Activated B cell treated with CpG ODN at 0.5 μM for 24 hours (primary cell): ENCODE measurements at regions of chr3 and their contacts with region 1.

Region 1: DNA sequence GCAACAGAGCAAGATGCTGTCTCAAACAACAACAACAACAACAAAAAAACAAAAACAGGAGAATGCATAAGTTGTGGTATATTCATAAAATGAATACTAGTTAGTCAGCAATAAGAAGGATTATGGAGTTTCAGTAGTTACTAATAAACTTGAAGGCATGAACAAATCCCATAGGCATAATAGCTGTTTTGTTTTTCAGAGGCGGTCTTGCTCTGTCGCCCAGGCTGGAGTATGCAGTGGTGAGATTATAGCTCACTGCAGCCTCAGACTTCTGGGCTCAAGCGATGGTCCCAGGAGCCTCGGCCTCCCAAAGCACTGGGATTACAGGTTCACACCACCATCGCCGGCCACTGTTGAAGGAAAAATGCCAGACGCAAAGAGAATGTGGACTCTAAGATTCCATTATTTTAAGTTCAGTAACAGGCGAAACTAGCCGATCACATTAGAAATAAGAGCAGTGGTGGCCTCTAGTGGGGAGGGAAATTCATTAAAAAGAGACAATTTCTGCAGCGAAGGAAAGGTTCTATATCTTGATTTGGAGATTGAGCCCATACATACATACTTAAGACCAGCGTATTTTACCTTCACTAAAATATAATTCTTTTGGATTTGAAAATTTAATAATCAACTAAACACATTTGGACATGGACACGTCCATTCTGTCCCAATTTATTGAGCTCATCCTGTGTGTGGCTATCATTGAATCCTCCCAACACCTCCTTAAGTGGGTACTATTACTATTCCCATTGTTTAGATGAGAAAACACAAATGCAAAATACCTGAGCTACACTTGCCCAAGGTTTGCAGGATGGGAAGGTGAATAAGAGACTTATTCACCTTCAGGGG is 27.4 kb upstream of the HDAC11 start:
- DNase-seq: peak; percentile 28
- ATAC-seq: no peak
- H3K4me3 Mint-ChIP-seq: peak overlapping the region; percentile 84
- H3K27ac Mint-ChIP-seq: peak overlapping the region; percentile 89
- H3K4me1 Mint-ChIP-seq: peaks cover 18% of the 10 kb centered on the region
- H3K27me3 Mint-ChIP-seq: no peaks in the 10 kb centered on the region
- CTCF ChIP-seq: no peak

Region 2: DNA sequence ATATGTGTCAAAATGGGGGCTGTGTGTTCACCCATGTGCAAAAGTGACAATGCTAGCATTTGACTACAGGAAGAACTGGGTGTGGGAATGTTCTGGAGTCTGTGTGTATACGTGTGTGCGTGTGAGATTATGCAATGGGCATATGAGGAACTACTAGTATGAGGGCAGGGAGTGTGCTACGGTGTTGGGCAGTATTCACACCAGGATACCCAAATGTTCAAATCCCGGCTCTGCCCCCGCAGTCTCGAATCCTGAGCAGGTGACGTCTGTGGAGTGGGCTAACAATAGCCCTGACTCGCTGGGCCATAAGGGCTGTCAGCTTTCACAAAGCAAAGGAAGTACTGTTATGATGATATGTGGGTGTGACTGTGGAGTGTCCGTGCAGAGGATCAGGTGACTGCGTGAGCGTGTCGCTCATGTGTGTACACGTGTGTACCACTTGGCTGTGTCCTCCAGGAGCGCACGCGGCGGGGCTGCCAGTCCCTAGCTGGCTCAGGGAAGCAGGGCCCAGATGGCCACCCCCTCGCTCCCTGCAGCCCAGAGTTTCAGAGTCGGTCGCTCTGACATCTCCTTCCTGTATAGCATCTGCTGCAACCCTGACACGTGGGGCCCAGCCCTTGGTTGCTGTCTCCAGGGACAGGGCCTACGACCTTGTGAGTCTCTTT is 406.7 kb before region 1 on chr3:
- CTCF ChIA-PET with region 1: no interaction called
- POLR2A ChIA-PET with region 1: no interaction called
- intact Hi-C with region 1: loop called (anchors 1 kb)
- DNase-seq: peak; percentile 61
- ATAC-seq: peak; percentile 90
- H3K4me3 Mint-ChIP-seq: peak overlapping the region; percentile 62
- H3K27ac Mint-ChIP-seq: peak overlapping the region; percentile 90
- H3K4me1 Mint-ChIP-seq: peaks cover 74% of the 10 kb centered on the region
- H3K27me3 Mint-ChIP-seq: no peaks in the 10 kb centered on the region
- CTCF ChIP-seq: no peak

Region 3: DNA sequence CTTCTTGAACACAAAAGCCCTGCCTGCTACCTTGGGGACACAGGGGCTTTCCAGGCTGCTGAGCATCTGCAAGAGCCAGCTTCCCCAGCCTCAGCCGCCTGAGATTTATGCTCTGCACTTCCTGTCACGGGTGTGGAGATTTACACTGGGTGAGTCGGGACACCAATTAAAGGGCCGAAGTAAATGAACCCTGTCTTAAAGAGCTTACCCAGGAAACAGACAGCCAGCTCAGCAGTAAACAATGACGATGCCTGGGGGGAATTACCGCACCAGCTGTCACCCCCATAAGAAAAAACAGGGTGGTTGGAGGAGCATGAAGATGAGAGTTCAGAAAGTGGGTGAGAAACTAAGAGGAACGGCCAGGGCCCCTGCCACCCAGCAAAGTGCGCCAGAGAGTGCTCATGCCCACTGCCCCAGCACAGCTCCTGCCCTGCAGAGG is 342.0 kb before region 1 on chr3:
- CTCF ChIA-PET with region 1: interaction called, 8 read pairs
- POLR2A ChIA-PET with region 1: interaction called, 8 read pairs
- intact Hi-C with region 1: loop called (anchors 1 kb)
- DNase-seq: peak; percentile 62
- ATAC-seq: peak; percentile 90
- H3K4me3 Mint-ChIP-seq: peak overlapping the region; percentile 73
- H3K27ac Mint-ChIP-seq: peak overlapping the region; percentile 96
- H3K4me1 Mint-ChIP-seq: peaks cover 60% of the 10 kb centered on the region
- H3K27me3 Mint-ChIP-seq: no peaks in the 10 kb centered on the region
- CTCF ChIP-seq: no peak

Region 4: DNA sequence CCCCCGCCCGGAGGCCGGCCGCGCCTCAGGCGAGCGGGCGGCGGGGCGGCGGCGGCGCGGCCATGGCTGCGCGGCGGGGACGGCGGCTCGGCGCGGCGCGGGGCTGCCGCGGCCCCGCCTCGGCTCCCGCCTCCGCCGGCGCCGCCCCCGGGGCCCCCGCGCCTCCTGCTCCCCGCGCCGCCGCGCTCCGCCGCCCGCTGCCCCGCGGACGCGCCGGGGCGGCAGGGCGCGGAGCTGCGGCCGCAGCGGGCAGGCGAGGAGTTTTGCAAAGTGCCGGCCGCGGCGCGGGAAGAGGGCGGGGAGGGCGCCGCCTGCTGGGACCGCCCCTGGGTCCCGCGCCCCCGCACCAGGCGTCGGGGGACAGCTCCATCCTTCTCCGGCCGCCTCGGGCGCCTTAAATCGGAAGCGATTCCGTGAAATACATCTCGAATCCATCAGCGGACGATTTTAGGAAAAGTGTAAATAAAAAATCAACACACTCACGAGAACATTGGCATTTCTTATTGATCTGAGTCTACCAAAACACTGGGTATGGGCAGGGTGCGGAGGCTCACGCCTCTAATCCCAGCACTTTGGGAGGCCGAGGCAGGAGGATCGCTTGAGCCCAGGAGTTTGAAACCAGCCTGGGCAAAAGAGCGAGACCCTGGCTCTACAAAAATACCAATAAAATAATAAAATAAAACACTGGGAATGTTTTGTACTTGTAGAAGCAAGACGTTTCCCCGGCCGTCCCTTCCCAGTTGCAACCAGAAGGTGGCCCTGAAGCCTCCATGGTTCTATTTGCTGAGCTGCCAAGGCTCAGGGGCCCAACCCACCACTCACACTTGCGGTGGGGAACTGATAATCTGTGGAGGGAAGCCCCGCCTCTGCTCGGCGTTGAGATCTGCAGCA is 169.5 kb before region 1 on chr3:
- CTCF ChIA-PET with region 1: interaction called, 13 read pairs
- POLR2A ChIA-PET with region 1: no interaction called
- intact Hi-C with region 1: loop called (anchors 1 kb)
- DNase-seq: peak; percentile 33
- ATAC-seq: peak; percentile 75
- H3K4me3 Mint-ChIP-seq: peak overlapping the region; percentile 78
- H3K27ac Mint-ChIP-seq: no peak overlapping the region
- H3K4me1 Mint-ChIP-seq: peaks cover 15% of the 10 kb centered on the region
- H3K27me3 Mint-ChIP-seq: peaks cover 43% of the 10 kb centered on the region
- CTCF ChIP-seq: no peak

Region 5: GRCh38 chr3:13346481-13347389 is 106.0 kb before region 1 on chr3:
- CTCF ChIA-PET with region 1: interaction called, 20 read pairs
- POLR2A ChIA-PET with region 1: interaction called, 3 read pairs
- intact Hi-C with region 1: loop called (anchors 2 kb)
- DNase-seq: no peak
- ATAC-seq: peak; percentile 56
- H3K4me3 Mint-ChIP-seq: no peak overlapping the region
- H3K27ac Mint-ChIP-seq: peak overlapping the region; percentile 41
- H3K4me1 Mint-ChIP-seq: peaks cover 15% of the 10 kb centered on the region
- H3K27me3 Mint-ChIP-seq: no peaks in the 10 kb centered on the region
- CTCF ChIP-seq: no peak

Region 6: GRCh38 chr3:13414040-13414729 is 38.5 kb before region 1 on chr3:
- CTCF ChIA-PET with region 1: interaction called, 26 read pairs
- POLR2A ChIA-PET with region 1: interaction called, 40 read pairs
- intact Hi-C with region 1: loop called (anchors 1 kb)
- DNase-seq: peak; percentile 76
- ATAC-seq: peak; percentile 93
- H3K4me3 Mint-ChIP-seq: peak overlapping the region; percentile 79
- H3K27ac Mint-ChIP-seq: peak overlapping the region; percentile 98
- H3K4me1 Mint-ChIP-seq: peaks cover 67% of the 10 kb centered on the region
- H3K27me3 Mint-ChIP-seq: no peaks in the 10 kb centered on the region
- CTCF ChIP-seq: no peak